ENCODE measurements at regions of chr11 and their contacts with region 1.

Region 1: GRCh38 chr11:2305140-2305840 is 3.5 kb downstream of the TSPAN32 start:
- DNase-seq: peak; percentile 83 to 96 (median 90)

Region 2: DNA sequence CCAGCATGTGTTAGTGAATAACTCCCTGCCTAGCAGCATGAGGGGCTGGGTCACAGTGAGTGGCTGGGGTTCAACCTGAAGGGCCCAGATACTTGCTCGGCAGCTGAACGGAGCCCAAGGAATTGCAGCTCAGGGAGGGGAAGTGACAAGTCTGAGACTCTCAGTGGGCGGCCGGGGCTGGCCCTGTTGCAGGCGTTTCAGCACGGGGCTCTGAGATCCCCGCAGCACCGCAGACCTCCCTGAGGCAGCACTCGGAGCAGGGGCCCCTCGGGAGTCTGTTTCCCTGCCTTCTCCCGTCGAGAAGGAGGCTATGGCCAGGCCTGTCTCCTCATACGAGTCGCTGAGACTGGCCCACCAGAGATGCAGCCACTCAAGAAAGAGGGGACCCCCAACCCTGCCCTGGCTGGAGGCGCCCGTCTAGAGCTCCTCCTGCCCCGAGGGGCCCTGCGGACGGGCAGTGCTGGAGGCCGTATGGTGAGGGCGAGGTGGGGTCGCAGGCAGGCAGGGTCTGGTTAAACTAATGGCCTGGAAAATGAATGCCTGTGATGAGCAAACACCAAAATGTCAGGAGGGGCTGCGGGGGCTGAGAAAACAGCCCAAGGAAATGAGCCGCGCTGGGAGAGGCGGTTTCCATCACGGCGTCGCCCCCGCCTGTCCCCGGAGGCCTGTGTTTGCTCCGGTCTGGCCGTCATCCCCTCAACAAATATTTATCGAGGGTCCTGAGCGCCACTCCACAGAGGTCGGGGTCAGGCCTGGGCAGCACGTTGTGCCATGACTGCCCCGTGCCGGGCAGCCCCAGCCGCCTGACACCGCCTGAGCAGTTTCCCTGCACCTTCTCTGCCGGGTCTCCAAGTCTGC is 104.5 kb after region 1 on chr11:
- intact Hi-C with region 1: no loop called
- DNase-seq: no peak

Region 3: GRCh38 chr11:2420502-2421225 is 115.4 kb after region 1 on chr11:
- intact Hi-C with region 1: loop called (anchors 2 kb)
- DNase-seq: peak; percentile 32 to 89 (median 80)

Region 4: DNA sequence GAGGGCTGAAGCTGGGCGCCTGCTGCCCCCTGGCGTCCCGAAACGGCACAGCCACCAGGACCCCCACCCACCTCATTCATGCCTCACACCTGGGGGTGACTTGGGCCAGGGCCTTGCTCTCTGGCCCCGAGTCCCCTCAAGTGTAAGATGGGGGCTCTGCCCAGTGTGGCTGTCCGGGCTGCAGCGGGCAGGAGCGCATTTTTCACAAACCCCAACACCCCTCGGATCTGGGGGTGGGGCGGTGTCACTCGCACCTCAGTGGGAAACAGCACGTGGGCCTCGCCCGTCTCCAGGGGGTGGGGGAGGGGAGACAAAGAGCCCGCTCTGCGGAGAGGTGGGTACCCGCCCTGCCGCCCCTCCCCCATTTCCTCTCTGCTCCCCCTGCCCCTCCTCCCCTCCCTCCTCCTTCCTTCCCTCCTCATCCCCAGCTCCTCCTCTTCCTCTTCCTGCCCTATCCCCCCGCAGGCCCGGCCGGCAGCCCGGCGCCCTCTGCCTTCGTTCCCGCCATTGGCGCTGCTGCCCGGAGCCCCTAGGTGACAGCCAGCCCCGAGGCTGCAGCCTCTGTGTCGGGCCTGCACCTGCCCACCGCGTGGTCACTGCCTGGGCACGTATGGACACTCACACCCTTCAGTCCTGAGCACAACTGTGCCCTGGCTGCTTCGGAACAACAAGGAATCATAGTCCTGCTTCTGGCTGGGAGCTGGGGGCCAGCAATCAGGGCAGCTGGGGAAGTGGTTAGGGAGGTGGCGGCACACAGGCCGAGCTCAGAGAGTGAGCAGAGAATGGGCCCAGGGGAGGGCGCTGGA is 587.1 kb after region 1 on chr11:
- intact Hi-C with region 1: loop called (anchors 10 kb)
- DNase-seq: peak in 35 of 42 donors; percentile 16 to 77 (median 58)